ENCODE measurements at regions of chr16 and their contacts with region 1.

Region 1: DNA sequence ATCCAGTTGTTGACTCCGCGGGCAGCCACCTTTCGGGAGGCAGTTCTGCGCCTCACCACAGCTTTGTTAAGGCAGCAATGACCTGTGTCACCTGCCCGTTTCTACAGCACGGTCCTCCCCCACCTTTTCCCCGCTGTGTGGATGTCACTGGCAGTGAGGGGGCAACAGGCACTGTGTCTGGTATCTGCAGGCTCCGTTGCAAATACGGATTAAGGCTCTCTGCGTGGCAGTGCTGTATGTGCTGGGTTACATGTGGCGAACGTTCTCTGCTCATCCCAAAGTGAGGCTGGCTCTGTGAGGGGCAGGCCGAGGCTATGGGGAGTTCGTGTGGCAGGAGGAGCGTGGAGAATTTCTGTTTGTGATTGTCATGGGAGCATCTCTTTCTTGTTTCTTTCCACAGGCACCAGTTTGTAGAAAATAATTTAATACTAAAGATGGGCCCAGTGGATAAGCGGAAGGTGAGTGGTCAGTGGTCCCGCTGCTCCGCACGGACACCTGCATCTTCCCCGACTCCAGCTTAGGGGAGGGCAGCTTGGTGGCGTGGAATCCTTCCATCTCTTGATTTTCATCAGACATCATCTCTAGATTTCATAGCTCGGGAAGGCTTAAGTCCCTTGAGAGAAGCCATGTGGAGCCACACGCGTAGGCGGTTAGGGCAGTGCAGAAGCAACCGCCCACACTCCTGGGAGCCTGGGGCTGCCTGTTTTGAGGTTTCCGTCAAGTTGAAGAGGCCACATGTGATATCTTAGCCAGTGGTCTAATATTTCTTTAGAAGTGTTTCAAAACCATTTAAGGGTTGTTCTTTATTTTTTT is 57.8 kb downstream of the PDPK1 start:
- DNase-seq: peak; percentile 27 to 33
- ATAC-seq: no peak
- H3K4me3 ChIP-seq: no peak overlapping the region
- H3K27ac ChIP-seq: no peak overlapping the region
- H3K4me1 ChIP-seq: no peaks in the 10 kb centered on the region
- H3K27me3 ChIP-seq: no peaks in the 10 kb centered on the region

Region 2: DNA sequence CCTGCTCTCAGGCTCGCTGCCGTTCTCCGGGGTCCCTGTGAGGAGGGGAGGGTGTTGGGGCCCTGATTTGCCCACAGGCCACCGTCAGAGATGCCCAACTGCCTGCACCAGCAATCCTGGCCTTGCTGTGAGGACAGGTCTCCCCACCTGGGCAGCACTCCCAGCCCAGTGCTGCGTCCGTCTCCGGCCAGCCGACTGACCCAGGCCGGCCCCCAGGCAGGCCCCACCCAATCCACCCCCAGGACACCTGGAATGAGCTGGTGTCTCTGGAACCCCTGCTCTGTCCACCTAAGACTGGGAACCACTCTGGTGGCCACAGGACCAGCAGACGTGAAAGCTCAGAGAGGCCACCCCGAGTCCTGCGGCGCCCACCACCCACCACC is 480.0 kb before region 1 on chr16:
- intact Hi-C with region 1: no loop called
- DNase-seq: no peak
- ATAC-seq: no peak
- H3K4me3 ChIP-seq: no peak overlapping the region
- H3K27ac ChIP-seq: no peak overlapping the region
- H3K4me1 ChIP-seq: no peaks in the 10 kb centered on the region
- H3K27me3 ChIP-seq: no peaks in the 10 kb centered on the region

Region 3: DNA sequence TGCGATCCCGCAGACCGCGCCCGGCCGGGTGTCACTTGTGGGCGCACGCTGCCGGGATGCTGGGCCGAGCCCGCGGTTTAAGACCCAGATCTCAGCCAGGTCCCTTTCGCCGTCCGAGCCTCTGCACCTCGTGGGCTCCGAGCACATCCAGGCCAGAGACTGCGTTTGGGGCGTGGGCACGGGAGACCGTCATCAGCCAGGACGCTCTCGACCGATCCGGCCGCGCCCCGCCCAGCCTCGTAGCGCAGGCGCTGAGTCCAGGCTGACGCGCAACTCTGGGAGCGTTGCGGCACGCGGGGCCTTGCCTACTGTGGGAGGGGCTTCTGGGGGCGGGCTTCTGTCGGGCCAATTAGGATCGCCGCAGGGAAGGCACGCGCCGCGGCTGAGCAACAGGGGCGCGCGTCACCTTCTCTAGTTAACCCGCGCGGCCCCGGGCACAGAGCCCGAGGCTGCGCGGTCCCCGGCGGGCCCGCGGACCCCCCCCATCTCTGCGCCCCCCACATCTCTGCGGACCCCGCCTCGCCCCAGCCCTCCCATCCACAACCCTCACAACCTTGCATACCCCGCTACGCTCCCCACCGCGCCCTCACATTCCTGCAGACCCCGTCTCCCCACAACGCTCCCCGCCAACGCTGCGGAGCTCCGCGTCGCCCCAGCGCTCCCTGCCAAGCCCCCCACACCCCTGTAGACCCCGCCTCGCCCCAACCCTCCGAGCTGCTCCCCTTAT is 63.7 kb before region 1 on chr16:
- intact Hi-C with region 1: loop called in 1 of 2 experiments (anchors 10 kb)
- DNase-seq: peak; percentile 100
- ATAC-seq: peak; percentile 96
- H3K4me3 ChIP-seq: peak overlapping the region; percentile 33 to 67
- H3K27ac ChIP-seq: peak overlapping the region; percentile 20 to 92
- H3K4me1 ChIP-seq: no peaks in the 10 kb centered on the region
- H3K27me3 ChIP-seq: no peaks in the 10 kb centered on the region

Region 4: DNA sequence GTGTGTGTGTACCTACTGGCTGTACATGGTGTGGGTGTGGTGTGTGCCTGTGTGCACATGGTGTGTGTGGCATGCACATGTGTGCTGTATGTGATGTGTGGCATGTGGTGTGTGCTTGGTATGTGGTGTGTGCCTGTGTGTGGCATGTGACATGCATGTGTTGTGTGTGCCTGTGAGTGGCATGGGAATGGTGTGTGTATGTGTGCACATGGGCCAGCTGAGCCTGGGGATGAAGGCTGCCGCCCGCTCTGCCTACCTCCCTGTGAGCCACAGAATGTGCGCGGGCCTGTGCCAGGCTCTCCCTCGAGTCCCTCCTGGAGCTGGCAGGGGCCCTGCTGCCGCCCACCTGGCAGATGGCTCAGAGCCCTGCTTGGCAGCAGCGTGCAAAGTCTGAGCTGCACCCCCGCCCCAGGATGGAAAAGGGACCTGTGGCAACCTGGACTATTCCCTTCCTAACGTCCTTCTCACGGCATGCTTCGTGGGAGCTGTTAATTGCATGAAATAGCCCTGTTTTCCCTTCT is 115.2 kb after region 1 on chr16:
- intact Hi-C with region 1: no loop called
- DNase-seq: no peak
- ATAC-seq: no peak
- H3K4me3 ChIP-seq: no peak overlapping the region
- H3K27ac ChIP-seq: no peak overlapping the region
- H3K4me1 ChIP-seq: no peaks in the 10 kb centered on the region
- H3K27me3 ChIP-seq: no peaks in the 10 kb centered on the region